ENCODE measurements at regions of chr7 and their contacts with region 1.

Region 1: DNA sequence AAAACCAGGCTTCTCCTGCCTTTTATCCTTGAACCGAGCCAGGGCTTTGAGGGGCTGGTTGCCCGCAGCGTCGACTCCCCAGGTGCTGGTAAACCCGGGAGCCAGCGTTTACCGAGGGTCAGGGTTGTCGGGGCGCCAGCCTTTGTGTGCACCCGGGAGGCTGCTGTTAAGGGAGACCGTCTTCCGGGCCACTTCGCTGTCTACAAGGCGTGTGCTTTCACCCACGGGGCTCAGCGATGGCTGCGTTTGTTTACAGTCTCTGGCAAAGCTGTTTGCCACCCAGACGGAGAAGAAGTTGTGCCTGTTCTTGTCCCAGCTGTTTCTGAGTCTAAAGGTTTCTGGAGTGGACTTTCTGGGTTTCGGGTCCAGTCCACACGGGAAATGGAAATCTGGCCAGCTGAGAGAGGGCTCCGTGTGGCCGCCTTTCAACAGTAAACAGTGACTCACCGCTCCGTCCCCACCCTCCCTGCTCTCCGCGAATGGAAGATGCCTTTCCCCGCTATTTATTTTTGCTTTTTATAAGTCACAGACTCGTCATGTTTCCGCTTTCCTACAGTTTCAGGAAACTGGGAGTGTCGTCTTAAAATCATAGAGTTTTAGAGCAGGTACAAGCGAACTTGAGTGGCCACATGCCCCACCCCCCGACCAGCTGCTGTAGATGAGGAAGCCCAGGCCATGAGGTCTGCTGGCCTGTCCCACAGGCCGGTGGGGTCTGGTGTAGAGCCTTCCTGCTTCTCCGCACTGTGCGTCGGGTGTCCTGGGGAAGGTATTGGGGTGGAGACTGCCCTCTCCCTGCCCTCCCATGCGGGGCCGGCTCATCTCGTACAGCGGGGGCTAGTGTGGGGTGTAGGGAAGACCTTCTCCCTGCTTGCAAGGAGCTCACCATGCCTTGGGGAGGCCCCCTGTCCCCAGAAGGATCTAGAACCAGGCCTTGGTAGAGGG is 2.3 kb downstream of the MAFK start:
- DNase-seq: peak; percentile 78
- ATAC-seq: peak; percentile 65
- H3K4me3 Mint-ChIP-seq: peak overlapping the region; percentile 89
- H3K27ac Mint-ChIP-seq: peak overlapping the region; percentile 89
- H3K4me1 Mint-ChIP-seq: peaks cover 27% of the 10 kb centered on the region
- H3K27me3 Mint-ChIP-seq: no peaks in the 10 kb centered on the region

Region 2: GRCh38 chr7:1412322-1413261 is 120.2 kb before region 1 on chr7:
- CTCF ChIA-PET with region 1: no interaction called
- POLR2A ChIA-PET with region 1: no interaction called
- intact Hi-C with region 1: loop called in 1 of 2 experiments (anchors 1 kb)
- DNase-seq: peak; percentile 97
- ATAC-seq: peak; percentile 82
- H3K4me3 Mint-ChIP-seq: no peak overlapping the region
- H3K27ac Mint-ChIP-seq: no peak overlapping the region
- H3K4me1 Mint-ChIP-seq: peaks cover 14% of the 10 kb centered on the region
- H3K27me3 Mint-ChIP-seq: peaks cover 5% of the 10 kb centered on the region

Region 3: DNA sequence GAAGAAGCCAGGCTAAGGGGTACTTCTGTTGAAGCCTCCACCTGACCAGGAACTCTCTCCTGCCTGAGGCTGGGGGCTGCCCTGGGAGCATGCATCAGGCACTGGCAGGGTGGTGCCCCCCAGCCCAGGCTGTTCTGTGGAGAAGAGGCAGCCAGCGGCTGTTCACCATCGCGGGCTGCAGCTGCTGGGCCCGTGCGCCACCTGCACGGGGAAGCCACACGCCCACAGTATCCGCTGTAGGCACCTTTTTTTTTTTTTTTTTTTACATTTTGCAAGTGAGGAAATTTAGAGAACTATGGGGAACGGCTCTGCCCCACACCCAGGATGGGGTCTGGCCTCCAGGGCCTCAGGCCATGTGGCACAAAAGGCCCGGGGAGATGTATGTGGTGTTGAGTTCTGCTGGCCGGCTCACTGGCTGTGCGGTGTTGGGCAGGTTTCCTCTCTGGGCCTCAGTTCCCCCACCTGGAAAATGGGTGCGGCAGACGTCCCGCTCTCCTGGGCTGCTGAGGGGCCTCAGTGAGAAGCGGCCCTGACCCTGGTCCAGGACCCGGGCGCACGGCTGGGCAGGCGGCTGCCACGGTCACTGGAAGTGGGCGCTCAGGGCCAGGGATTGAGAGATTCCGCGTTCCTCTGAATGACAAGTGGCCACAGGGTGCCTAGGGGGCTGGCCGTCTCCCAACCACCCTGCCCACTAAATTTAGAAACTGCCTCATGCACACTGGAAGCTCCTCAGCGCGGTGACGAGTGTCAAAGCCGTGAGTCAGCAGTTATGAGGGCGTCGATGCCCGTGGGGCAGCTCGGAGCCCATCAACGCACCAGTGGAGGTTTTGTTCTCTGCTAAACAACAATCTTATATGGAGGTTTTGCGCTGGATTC is 19.7 kb before region 1 on chr7:
- CTCF ChIA-PET with region 1: no interaction called
- POLR2A ChIA-PET with region 1: no interaction called
- intact Hi-C with region 1: loop called in 1 of 2 experiments (anchors 1 kb)
- DNase-seq: peak; percentile 75
- ATAC-seq: peak; percentile 84
- H3K4me3 Mint-ChIP-seq: peak overlapping the region; percentile 30
- H3K27ac Mint-ChIP-seq: peak overlapping the region; percentile 79
- H3K4me1 Mint-ChIP-seq: peaks cover 38% of the 10 kb centered on the region
- H3K27me3 Mint-ChIP-seq: no peaks in the 10 kb centered on the region

Region 4: GRCh38 chr7:2403014-2403717 is 870.4 kb after region 1 on chr7 and contains the start of gene CHST12:
- CTCF ChIA-PET with region 1: no interaction called
- POLR2A ChIA-PET with region 1: no interaction called
- intact Hi-C with region 1: loop called in 1 of 2 experiments (anchors 1 kb)
- DNase-seq: peak; percentile 97
- ATAC-seq: peak; percentile 70
- H3K4me3 Mint-ChIP-seq: peak within 1 kb of the TSS; percentile 79
- H3K27ac Mint-ChIP-seq: no peak within 1 kb of the TSS
- H3K4me1 Mint-ChIP-seq: peaks cover 41% of the 10 kb centered on the region
- H3K27me3 Mint-ChIP-seq: peaks cover 6% of the 10 kb centered on the region
- total RNA-seq, gene CHST12: 1.8 to 1.9 TPM